ENCODE measurements at regions of chr13 and their contacts with region 1.

Region 1: GRCh38 chr13:27374650-27375049 is 49.8 kb upstream of the GTF3A start:
- DNase-seq: peak; percentile 14 to 75 (median 51)
- ATAC-seq: peak; percentile 85
- H3K4me3 ChIP-seq: no peak overlapping the region
- H3K4me3 Mint-ChIP-seq: no peak overlapping the region
- H3K27ac ChIP-seq: no peak overlapping the region
- H3K27ac Mint-ChIP-seq: no peak overlapping the region
- H3K4me1 ChIP-seq: no peaks in the 10 kb centered on the region
- H3K4me1 Mint-ChIP-seq: peaks cover 5% of the 10 kb centered on the region
- H3K27me3 ChIP-seq: no peaks in the 10 kb centered on the region
- H3K27me3 Mint-ChIP-seq: peaks cover 28% of the 10 kb centered on the region
- CTCF ChIP-seq: peak; percentile 67

Region 2: GRCh38 chr13:27362064-27362883 is 12.4 kb before region 1 on chr13:
- CTCF ChIA-PET with region 1: interaction called, 48 read pairs
- POLR2A ChIA-PET with region 1: no interaction called
- intact Hi-C with region 1: no loop called
- DNase-seq: peak; percentile 56 to 86 (median 78)
- ATAC-seq: peak; percentile 90
- H3K4me3 ChIP-seq: peak overlapping the region; percentile 17 to 39
- H3K4me3 Mint-ChIP-seq: peak overlapping the region; percentile 67
- H3K27ac ChIP-seq: no peak overlapping the region
- H3K27ac Mint-ChIP-seq: no peak overlapping the region
- H3K4me1 ChIP-seq: peaks cover 5% of the 10 kb centered on the region
- H3K4me1 Mint-ChIP-seq: peaks cover 5% of the 10 kb centered on the region
- H3K27me3 ChIP-seq: peaks cover 0 to 10% of the 10 kb centered on the region in 2 experiments
- H3K27me3 Mint-ChIP-seq: peaks cover 17% of the 10 kb centered on the region
- CTCF ChIP-seq: peak; percentile 73

Region 3: DNA sequence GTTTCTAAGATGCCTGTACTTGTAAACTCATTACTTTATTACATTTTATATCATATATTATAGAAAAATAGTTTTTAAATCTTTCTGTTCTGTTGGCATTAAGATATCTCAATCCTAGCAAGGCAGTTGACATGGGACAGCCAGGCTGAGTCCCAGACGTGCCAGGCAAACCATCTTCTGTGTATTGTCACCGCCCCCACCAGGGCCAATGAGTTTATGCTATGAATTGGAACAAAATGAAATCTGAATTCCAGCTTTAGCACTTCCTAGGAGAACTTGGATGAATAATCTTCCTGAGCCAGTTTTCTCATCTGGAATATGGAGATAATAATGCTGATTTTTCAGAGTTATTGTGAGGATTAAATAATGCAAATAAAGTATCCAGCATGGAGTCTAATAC is 337.8 kb after region 1 on chr13:
- CTCF ChIA-PET with region 1: no interaction called
- POLR2A ChIA-PET with region 1: no interaction called
- intact Hi-C with region 1: loop called (anchors 2 to 5 kb)
- DNase-seq: peak in 5 of 9 experiments; percentile 27 to 58 (median 36)
- ATAC-seq: no peak
- H3K4me3 ChIP-seq: no peak overlapping the region
- H3K4me3 Mint-ChIP-seq: no peak overlapping the region
- H3K27ac ChIP-seq: no peak overlapping the region
- H3K27ac Mint-ChIP-seq: no peak overlapping the region
- H3K4me1 ChIP-seq: no peaks in the 10 kb centered on the region
- H3K4me1 Mint-ChIP-seq: no peaks in the 10 kb centered on the region
- H3K27me3 ChIP-seq: no peaks in the 10 kb centered on the region
- H3K27me3 Mint-ChIP-seq: peaks cover 16% of the 10 kb centered on the region
- CTCF ChIP-seq: peak; percentile 21

Region 4: GRCh38 chr13:27783111-27783510 is 408.5 kb after region 1 on chr13:
- CTCF ChIA-PET with region 1: no interaction called
- POLR2A ChIA-PET with region 1: no interaction called
- intact Hi-C with region 1: loop called in 1 of 2 experiments (anchors 5 kb)
- DNase-seq: no peak
- ATAC-seq: no peak
- H3K4me3 ChIP-seq: no peak overlapping the region
- H3K4me3 Mint-ChIP-seq: no peak overlapping the region
- H3K27ac ChIP-seq: no peak overlapping the region
- H3K27ac Mint-ChIP-seq: no peak overlapping the region
- H3K4me1 ChIP-seq: no peaks in the 10 kb centered on the region
- H3K4me1 Mint-ChIP-seq: no peaks in the 10 kb centered on the region
- H3K27me3 ChIP-seq: peaks cover 0 to 2% of the 10 kb centered on the region in 2 experiments
- H3K27me3 Mint-ChIP-seq: peaks cover 28% of the 10 kb centered on the region
- CTCF ChIP-seq: no peak

Region 5: DNA sequence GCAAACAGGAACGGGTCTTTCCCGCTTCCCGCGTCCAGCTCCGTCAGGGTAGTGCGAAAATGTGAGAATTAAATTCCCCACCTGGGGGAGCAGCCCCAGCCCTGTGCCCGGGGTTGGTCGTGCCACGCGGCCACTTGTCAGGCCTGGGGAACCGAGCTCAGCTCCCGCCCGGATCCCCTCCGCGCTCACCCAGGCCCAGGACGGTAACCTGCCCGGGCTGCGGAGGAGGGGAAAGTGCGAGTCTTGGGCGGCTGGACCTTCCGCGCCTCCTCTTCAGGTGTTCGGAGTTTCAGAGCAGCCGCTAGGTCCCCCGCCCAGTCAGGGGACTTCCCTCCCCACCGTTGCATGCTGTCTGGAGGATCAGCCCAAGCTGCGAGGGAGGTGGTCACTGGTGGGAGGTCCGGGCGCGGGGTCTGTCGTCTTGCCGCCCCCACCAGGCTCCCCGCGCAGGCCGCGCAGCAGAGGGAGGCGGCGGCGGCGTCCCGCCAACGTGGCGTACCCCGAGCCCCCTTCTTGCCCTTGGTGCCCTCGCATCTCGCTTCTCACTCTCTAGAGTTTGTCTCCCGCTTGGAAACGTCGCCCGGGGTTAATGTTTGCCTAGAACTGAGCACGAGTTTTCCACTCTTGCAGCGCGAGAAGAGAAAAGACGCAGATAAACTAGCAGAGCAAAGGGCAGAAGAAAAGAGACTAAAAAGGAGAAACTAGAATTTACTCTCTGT is 605.8 kb after region 1 on chr13:
- CTCF ChIA-PET with region 1: interaction called, 28 read pairs
- POLR2A ChIA-PET with region 1: no interaction called
- intact Hi-C with region 1: loop called in 1 of 2 experiments (anchors 1 kb)
- DNase-seq: no peak
- ATAC-seq: no peak
- H3K4me3 ChIP-seq: no peak overlapping the region
- H3K4me3 Mint-ChIP-seq: no peak overlapping the region
- H3K27ac ChIP-seq: no peak overlapping the region
- H3K27ac Mint-ChIP-seq: no peak overlapping the region
- H3K4me1 ChIP-seq: no peaks in the 10 kb centered on the region
- H3K4me1 Mint-ChIP-seq: peaks cover 29% of the 10 kb centered on the region
- H3K27me3 ChIP-seq: peaks cover 6 to 24% of the 10 kb centered on the region in 2 experiments
- H3K27me3 Mint-ChIP-seq: peaks cover 64% of the 10 kb centered on the region
- CTCF ChIP-seq: no peak

Region 6: DNA sequence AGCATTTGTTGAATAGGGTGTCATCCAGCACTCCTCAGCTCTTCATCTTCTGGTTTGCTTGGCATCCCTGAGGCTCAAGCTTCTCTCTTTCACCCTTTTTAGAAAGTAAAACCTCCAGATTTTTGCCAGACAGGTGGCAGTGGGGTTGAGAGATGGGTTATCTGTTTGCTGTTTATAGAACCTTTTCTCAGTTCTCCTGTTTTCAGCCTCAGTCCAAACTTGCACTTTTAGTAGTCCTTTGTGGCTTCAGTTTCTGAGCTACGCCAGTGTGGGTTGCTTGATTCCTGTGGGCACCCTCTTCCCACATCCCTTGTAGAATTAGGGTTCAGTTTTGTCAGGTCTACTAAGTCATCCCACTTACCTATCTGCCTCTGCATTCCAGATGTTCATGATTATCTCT is 911.6 kb after region 1 on chr13:
- CTCF ChIA-PET with region 1: no interaction called
- POLR2A ChIA-PET with region 1: no interaction called
- intact Hi-C with region 1: no loop called
- DNase-seq: no peak
- ATAC-seq: no peak
- H3K4me3 ChIP-seq: no peak overlapping the region
- H3K4me3 Mint-ChIP-seq: no peak overlapping the region
- H3K27ac ChIP-seq: no peak overlapping the region
- H3K27ac Mint-ChIP-seq: peak overlapping the region; percentile 75
- H3K4me1 ChIP-seq: no peaks in the 10 kb centered on the region
- H3K4me1 Mint-ChIP-seq: no peaks in the 10 kb centered on the region
- H3K27me3 ChIP-seq: no peaks in the 10 kb centered on the region
- H3K27me3 Mint-ChIP-seq: no peaks in the 10 kb centered on the region
- CTCF ChIP-seq: no peak

Measured in CD8-positive, alpha-beta T cell (primary cell).